H1 (cell line): ENCODE measurements at regions of chr16 and their contacts with region 1.

Region 1: GRCh38 chr16:75402821-75403475 is 30.4 kb downstream of the CFDP1 start:
- DNase-seq: no peak
- H3K4me3 ChIP-seq: no peak overlapping the region
- H3K27ac ChIP-seq: no peak overlapping the region
- H3K4me1 ChIP-seq: no peaks in the 10 kb centered on the region
- H3K27me3 ChIP-seq: no peaks in the 10 kb centered on the region
- CTCF ChIP-seq: peak in 2 of 3 experiments; percentile 13 to 57; a peak in 2 of 4 replicates
- EP300 ChIP-seq: no peak
- POLR2A ChIP-seq: no peak
- RAD21 ChIP-seq: peak; percentile 26 to 33; a peak in 3 of 4 replicates

Region 2: DNA sequence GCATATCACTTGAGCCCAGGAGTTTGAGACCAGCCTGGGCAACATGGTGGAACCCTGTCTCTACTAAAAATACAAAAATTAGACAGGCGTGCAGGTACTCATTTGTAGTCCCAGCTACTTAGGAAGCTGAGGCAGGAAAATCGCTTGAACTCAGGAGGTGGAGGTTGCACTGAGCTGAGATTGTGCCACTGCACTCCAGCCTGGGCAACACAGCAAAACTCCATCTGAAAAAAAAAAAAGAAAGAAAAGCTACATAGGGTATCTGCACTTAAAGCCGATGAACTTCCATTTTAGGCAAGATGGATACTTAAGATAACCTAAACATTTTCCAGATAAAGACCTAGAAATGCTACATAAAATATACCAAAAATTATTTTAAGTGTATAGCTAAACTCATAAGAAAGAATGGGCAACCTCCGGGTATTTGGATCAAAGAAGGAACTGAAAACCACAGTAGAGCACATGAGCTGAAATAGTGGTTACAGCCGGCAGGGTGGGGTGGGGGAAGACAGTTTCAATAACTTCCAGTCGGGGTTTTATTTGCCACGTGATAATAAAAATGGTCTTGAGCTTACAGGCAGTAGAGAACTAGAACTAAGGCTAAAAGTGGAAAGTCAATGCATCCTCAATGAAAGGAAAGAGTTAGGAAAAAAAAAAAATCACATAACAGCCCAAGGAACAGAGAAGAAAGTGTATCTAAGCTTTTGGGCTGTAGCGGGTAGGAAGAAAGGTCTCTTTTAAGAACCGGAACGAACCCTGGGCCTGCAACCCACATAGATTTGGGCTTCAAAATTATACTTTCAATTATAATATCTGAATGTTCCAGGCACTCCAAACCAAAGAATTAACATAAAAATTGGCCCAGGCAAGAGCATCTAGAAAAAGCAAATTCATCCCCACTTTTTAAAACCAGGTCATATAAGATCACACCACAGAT is 22.8 kb before region 1 on chr16:
- CTCF ChIA-PET with region 1: interaction called, 10 read pairs
- POLR2A ChIA-PET with region 1: no interaction called
- DNase-seq: no peak
- H3K4me3 ChIP-seq: no peak overlapping the region
- H3K27ac ChIP-seq: no peak overlapping the region
- H3K4me1 ChIP-seq: peaks cover 0 to 4% (median 2%) of the 10 kb centered on the region in 4 experiments; a peak in 1 of 7 replicates
- H3K27me3 ChIP-seq: no peaks in the 10 kb centered on the region
- CTCF ChIP-seq: no peak
- EP300 ChIP-seq: no peak
- POLR2A ChIP-seq: no peak
- RAD21 ChIP-seq: no peak

Region 3: DNA sequence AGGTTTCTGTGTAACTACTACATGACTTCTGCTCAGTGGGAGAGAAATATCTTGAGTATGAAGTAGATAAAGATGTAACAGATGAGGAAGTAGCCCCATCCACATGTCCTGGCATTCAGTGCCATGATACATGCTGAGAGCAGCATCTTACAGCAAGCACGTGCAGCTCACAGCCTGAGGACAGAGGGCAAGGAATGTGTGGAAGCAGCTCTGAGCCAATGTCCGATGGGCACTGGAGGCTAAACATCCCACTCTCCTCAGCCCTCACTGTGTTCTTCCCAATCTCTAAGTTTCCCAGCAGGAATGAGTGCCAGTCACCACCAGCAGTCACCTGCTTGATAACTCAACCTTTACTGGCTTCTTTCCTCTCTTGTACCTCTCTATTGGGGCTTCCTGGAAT is 10.0 kb before region 1 on chr16:
- CTCF ChIA-PET with region 1: interaction called, 14 read pairs
- POLR2A ChIA-PET with region 1: interaction called, 3 read pairs
- DNase-seq: no peak
- H3K4me3 ChIP-seq: no peak overlapping the region
- H3K27ac ChIP-seq: no peak overlapping the region
- H3K4me1 ChIP-seq: no peaks in the 10 kb centered on the region
- H3K27me3 ChIP-seq: no peaks in the 10 kb centered on the region
- CTCF ChIP-seq: no peak
- EP300 ChIP-seq: no peak
- POLR2A ChIP-seq: no peak
- RAD21 ChIP-seq: no peak

Region 4: GRCh38 chr16:75420987-75421819 is 18.3 kb after region 1 on chr16:
- CTCF ChIA-PET with region 1: interaction called, 33 read pairs
- POLR2A ChIA-PET with region 1: interaction called, 3 read pairs
- DNase-seq: peak; percentile 53 to 88
- H3K4me3 ChIP-seq: peak overlapping the region in 1 of 4 experiments; percentile 39; a peak in 1 of 8 replicates
- H3K27ac ChIP-seq: no peak overlapping the region
- H3K4me1 ChIP-seq: peaks cover 0 to 8% (median 2%) of the 10 kb centered on the region in 4 experiments; a peak in 3 of 7 replicates
- H3K27me3 ChIP-seq: no peaks in the 10 kb centered on the region
- CTCF ChIP-seq: no peak
- EP300 ChIP-seq: no peak
- POLR2A ChIP-seq: peak in 1 of 2 experiments; percentile 57; a peak in 1 of 3 replicates
- RAD21 ChIP-seq: no peak